ENCODE measurements at regions of chr7 and their contacts with region 1.

Region 1: DNA sequence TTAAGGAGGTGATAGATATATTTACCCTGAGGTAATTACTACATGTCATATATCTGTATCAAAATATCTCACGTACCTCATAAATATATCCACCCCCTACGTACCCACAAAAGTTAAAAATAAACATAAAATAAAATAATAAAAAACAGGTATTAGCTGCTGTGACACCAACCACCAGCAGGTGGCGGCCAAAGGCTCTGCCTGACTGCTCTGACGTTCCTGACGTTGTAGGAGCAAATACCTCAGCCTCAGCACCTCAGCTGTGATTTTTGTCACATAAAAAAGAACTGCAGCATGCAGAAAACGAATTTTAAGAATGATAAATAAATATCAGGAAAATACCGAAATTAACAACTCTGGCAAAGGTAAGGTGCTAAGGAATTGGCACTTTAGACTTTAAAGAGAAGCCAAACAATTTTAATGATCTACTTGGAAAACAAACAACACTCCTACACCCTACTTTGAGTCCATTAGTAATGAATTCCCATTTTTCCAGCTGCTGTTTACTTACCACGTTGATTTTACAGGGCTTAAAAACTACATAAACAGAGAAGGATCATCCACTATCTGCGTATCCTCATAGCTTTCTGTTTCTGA is 125.4 kb upstream of the TARP start:
- DNase-seq: peak; percentile 69
- ATAC-seq: peak; percentile 66

Region 2: DNA sequence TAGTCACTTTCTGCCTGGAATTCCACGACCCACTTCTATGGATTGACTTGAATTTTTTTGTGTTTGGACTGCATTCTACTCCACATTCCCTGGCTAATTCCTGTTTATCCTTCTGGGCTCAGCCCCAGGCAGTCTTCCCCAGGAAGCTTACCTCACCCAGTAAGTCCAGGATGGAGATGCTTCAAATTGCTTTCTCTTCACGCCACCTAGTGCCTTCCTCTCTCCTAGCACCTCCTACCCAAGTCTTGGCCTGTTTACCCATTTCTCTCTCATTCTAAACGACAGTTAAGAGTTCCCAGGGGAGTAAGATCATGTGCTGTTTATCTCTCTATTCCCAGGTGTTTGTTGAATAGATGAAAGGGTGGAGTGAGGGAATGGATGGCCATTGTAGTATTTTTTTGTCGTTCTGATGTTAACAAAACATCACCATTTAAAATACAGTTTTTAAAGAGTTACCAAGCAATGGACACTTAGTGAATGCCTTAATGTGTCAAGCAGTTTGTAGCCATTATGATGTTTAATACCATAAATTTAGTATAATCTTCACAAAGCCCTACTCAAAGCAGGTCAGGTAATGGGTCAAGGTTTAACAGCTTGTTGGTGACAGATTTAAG is 79.9 kb before region 1 on chr7:
- intact Hi-C with region 1: no loop called
- DNase-seq: no peak
- ATAC-seq: peak; percentile 71

Region 3: DNA sequence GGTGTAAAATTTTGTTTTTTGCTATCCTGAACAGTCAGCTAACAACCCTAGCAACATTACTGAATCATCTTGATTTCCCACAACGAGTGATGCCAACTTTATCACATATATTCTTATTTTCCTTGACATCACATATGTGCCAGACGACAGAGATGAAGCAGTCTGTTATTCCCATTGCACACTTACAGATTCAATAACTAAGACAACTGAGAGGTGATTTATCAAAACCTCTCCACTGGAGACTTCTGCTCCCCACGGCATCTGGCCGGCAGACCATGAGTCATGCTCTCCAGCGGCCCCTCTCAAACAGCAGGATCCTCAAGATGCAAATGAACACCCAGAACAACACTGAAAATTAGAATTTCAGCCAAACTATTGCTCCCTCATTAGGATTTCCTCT is 175.3 kb after region 1 on chr7:
- intact Hi-C with region 1: no loop called
- DNase-seq: no peak
- ATAC-seq: no peak

Region 4: GRCh38 chr7:38660427-38661099 is 261.7 kb after region 1 on chr7:
- intact Hi-C with region 1: loop called (anchors 10 kb)
- DNase-seq: no peak
- ATAC-seq: peak; percentile 60

Region 5: DNA sequence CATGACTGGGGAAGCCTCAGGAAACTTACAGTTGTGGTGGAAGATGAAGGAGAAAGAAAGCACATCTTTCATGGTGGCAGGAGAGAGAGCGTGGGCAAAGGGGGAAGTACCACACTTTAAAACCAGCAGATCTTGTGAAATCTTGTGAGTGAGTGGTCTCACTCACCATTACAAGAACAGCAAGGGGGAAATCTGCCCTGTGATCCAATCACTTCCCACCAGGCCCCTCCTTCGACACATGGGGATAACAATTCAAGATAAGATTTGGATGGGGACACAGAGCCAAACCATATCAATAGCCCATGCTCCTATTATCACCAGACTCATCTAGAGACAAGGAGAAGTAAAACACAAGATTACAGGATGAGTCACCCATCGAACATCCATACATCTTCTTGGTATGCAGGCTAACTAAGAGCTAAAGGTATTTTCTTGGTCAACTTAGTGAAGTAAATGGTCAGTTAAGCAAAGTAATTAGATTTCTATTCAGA is 1112.1 kb after region 1 on chr7:
- intact Hi-C with region 1: loop called (anchors 5 kb)
- DNase-seq: no peak
- ATAC-seq: no peak

Measured in Right ventricle myocardium superior (tissue), 1 donor.